Psoas muscle (tissue), 8 donors: ENCODE measurements at regions of chr6 and their contacts with region 1.

Region 1: DNA sequence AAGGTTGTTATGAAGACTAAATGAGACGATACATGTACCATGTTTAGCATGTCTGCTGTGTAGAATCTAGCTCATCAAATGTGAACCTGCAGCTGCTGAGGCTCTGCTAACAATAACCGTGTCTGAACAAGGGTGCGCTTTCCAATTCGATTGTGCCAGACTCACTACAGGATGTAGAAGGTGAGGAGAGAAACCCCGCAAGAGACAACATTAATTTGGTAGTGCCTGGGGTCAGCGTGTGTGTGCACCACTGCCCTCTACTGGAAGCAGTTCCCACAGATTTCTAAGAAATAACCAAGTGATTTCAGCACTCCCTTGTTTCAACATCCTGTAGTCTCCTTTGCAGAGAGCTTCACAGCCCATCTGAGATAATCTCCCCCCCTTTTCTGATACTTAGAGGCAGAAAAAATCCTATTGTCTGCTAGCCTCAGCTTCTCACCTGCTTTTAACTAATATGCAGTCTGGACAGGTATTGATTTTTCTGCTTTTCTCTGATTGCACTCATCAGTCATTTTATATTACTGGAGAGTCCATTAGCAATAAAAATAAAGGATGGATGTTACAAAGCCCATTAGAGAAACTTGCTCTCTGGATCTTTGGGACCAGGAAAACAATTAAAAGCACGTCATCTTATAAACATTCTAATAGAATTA is 96.7 kb upstream of the BACH2 start:
- DNase-seq: peak; percentile 43 to 61
- ATAC-seq: peak; percentile 77 to 89 (median 84)
- H3K4me3 ChIP-seq: no peak overlapping the region
- H3K27ac ChIP-seq: no peak overlapping the region
- H3K4me1 ChIP-seq: no peaks in the 10 kb centered on the region
- H3K27me3 ChIP-seq: no peaks in the 10 kb centered on the region
- CTCF ChIP-seq: peak; percentile 78

Region 2: DNA sequence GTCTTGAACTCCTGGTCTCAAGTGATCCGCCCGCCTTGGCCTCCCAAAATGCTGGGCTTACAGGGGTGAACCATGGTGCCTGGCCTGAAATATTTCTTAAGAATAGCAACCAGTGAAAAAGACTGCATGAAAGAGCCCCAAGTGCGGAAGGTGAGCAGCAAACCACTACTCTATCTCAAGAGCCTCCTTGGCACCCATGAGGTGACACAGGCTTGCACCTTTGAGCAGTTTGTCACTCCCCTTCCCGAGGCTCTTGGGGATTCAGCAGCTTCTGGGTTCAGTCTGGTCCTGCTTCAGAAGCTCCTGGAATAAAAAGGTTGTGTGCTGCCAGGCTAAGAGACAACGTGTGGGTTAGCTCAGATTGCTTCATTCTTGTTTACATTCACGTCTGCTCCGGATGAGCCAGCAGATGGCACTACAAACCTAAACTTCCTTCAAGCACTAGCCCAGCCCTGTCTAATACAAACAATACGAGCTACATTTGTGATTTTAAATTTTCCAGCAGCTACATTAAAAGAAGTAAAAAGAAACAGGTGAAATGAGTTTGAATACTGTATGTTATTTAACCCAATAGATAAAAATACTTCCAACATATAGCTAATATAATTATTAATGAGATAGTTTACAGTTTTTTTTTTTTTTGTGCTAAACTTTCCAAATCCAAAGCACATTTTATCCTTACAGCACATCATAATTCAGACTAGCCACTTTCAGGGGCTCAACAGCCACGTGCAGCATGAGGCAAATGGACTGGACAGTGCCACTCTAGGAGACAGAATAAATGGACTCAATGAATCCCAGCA is 452.9 kb before region 1 on chr6:
- intact Hi-C with region 1: loop called (anchors 5 kb)
- DNase-seq: peak in 1 of 2 donors; percentile 48
- ATAC-seq: peak; percentile 87 to 96 (median 90)
- H3K4me3 ChIP-seq: no peak overlapping the region
- H3K27ac ChIP-seq: no peak overlapping the region
- H3K4me1 ChIP-seq: peaks cover 14% of the 10 kb centered on the region
- H3K27me3 ChIP-seq: no peaks in the 10 kb centered on the region
- CTCF ChIP-seq: peak; percentile 68

Region 3: GRCh38 chr6:89970609-89971337 is 422.6 kb before region 1 on chr6:
- intact Hi-C with region 1: loop called (anchors 2 kb)
- DNase-seq: peak; percentile 23 to 54
- ATAC-seq: peak; percentile 43 to 84 (median 65)
- H3K4me3 ChIP-seq: no peak overlapping the region
- H3K27ac ChIP-seq: no peak overlapping the region
- H3K4me1 ChIP-seq: peaks cover 32% of the 10 kb centered on the region
- H3K27me3 ChIP-seq: no peaks in the 10 kb centered on the region
- CTCF ChIP-seq: peak; percentile 57

Region 4: GRCh38 chr6:90074161-90074850 is 319.1 kb before region 1 on chr6:
- intact Hi-C with region 1: loop called in 1 of 2 experiments (anchors 5 kb)
- DNase-seq: no peak
- ATAC-seq: no peak
- H3K4me3 ChIP-seq: no peak overlapping the region
- H3K27ac ChIP-seq: no peak overlapping the region
- H3K4me1 ChIP-seq: peaks cover 17% of the 10 kb centered on the region
- H3K27me3 ChIP-seq: no peaks in the 10 kb centered on the region
- CTCF ChIP-seq: no peak

Region 5: DNA sequence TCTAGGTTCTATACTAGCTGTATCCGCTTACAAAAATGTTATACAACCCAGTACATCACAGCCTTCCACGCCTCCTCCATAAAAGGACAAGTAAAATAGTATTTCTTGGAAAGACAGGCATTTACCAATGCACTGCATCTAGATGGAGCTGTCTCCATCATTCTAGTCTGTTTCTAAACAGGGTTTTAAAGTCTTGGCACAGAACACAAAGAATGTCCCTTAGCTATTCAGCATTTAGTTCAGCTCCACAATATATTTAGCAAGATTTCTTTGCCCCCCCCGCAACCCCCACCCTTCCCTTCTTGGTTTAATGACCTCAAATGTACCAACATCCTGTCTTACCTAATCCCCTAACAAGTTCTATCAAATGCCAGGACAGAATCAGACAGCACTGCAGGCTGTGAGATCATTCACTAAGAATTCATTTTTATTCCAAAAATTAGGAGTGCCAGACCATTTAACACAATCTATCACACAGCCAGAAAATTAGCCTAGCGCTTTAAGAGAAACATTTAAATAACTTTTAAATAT is 295.3 kb before region 1 on chr6:
- intact Hi-C with region 1: loop called in 1 of 2 experiments (anchors 2 kb)
- DNase-seq: peak; percentile 81 to 82
- ATAC-seq: peak; percentile 87 to 91 (median 88)
- H3K4me3 ChIP-seq: no peak overlapping the region
- H3K27ac ChIP-seq: peak overlapping the region; percentile 86
- H3K4me1 ChIP-seq: peaks cover 39% of the 10 kb centered on the region
- H3K27me3 ChIP-seq: no peaks in the 10 kb centered on the region
- CTCF ChIP-seq: peak; percentile 37

Region 6: DNA sequence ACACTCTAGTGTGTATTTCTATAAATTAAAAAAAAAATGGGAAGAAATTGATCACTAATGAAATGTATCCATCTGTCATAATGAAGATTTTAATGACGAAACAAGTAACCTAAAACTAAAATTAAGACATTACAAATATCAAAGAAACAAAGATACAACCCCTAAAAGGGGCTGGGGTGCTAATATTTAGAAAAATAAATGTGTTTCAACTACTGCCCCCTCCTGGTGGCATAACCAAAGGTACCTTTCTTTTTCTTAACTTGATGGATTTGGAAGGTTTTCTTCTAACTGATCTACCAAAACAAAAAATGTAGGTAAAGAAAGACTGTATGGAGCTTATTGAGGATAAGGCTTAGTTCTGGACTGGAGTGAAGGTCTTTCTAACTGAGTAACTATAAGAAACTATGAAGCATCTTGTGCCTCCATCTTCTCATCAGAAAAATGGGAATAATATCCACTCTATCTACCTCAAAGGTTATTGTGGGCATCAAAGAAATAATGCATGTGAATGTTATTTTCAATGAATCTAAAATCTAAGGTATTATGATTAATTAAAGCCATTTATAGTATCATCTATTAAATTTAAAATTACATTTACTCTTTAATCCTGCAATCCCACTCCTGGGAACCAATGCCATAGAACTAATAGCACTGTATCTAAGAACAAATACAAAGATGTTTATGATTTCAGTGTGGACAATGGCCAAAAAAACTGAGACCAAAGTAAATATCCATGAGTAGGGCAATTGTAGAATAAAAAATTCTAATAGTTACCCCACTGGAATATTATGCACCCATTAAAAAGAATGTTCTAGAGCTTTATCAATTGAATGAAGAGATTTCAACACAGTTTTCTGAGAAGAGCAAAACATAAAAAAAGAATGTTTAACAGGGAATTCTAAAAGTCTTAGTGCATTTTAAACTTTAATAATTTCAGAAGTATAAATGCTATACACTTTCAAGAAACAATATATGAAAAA is 213.9 kb before region 1 on chr6:
- intact Hi-C with region 1: no loop called
- DNase-seq: no peak
- ATAC-seq: no peak
- H3K4me3 ChIP-seq: no peak overlapping the region
- H3K27ac ChIP-seq: no peak overlapping the region
- H3K4me1 ChIP-seq: peaks cover 39% of the 10 kb centered on the region
- H3K27me3 ChIP-seq: no peaks in the 10 kb centered on the region
- CTCF ChIP-seq: peak; percentile 35

Region 7: GRCh38 chr6:90222724-90223198 is 170.6 kb before region 1 on chr6:
- intact Hi-C with region 1: loop called in 1 of 2 experiments (anchors 10 kb)
- DNase-seq: no peak
- ATAC-seq: no peak
- H3K4me3 ChIP-seq: no peak overlapping the region
- H3K27ac ChIP-seq: peak overlapping the region; percentile 96
- H3K4me1 ChIP-seq: peaks cover 23% of the 10 kb centered on the region
- H3K27me3 ChIP-seq: no peaks in the 10 kb centered on the region
- CTCF ChIP-seq: no peak

Region 8: DNA sequence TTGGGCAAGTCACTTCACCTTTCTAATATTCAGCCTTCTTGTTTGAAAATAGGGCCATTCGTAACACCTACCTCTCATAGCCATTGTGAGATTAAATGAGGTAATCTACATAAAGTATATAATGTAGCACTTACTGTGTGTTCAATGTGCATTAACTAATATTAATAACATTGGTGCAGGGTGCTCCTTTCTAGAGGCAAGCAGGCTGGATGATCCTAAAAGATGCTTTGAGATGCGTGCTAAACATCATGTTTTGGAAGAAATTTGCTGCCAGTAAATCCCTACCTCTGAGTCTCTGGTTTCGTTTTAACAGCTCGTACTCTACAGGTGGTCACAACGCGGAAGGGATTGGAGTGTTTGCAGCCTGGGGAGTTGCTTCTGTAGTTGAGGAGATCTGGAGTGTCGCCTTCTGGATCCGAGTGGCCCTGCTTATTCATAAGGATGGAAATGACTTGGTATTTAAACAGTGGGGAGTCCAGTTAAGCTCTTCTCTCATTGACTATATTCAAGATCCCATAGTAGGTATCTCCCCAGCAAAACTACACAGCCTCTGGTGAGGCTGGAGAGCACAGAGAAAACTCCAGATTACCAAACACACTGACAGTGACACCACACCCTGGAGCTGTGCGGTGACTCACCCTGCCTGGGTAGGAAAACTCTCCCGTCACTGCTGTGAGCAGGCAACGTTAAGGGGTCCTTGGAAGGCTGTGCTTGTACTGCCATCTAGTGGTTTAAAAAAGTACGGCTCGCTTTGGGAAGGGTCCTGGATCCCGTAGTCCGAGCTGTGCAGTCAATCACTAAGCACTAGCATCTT is 85.6 kb after region 1 on chr6:
- intact Hi-C with region 1: loop called (anchors 5 kb)
- DNase-seq: peak; percentile 90 to 94
- ATAC-seq: peak; percentile 100
- H3K4me3 ChIP-seq: no peak overlapping the region
- H3K27ac ChIP-seq: peak overlapping the region; percentile 51
- H3K4me1 ChIP-seq: peaks cover 9% of the 10 kb centered on the region
- H3K27me3 ChIP-seq: no peaks in the 10 kb centered on the region
- CTCF ChIP-seq: peak; percentile 97

Region 9: GRCh38 chr6:90663863-90664262 is 270.5 kb after region 1 on chr6:
- intact Hi-C with region 1: no loop called
- DNase-seq: no peak
- ATAC-seq: no peak
- H3K4me3 ChIP-seq: no peak overlapping the region
- H3K27ac ChIP-seq: no peak overlapping the region
- H3K4me1 ChIP-seq: no peaks in the 10 kb centered on the region
- H3K27me3 ChIP-seq: no peaks in the 10 kb centered on the region
- CTCF ChIP-seq: no peak